Heart right ventricle (tissue), 16 donors: ENCODE measurements at regions of chr6 and their contacts with region 1.

Region 1: GRCh38 chr6:158072083-158072721 is 90.5 kb downstream of the SYNJ2 start:
- DNase-seq: peak; percentile 74 to 77
- ATAC-seq: peak; percentile 57 to 77 (median 62)
- H3K4me3 ChIP-seq: no peak overlapping the region
- H3K27ac ChIP-seq: peak overlapping the region in 3 of 10 donors; percentile 6 to 29 (median 16)
- H3K4me1 ChIP-seq: peaks cover 0 to 48% (median 11%) of the 10 kb centered on the region in 9 donors
- H3K27me3 ChIP-seq: no peaks in the 10 kb centered on the region
- CTCF ChIP-seq: peak; percentile 81 to 92 (median 85)

Region 2: DNA sequence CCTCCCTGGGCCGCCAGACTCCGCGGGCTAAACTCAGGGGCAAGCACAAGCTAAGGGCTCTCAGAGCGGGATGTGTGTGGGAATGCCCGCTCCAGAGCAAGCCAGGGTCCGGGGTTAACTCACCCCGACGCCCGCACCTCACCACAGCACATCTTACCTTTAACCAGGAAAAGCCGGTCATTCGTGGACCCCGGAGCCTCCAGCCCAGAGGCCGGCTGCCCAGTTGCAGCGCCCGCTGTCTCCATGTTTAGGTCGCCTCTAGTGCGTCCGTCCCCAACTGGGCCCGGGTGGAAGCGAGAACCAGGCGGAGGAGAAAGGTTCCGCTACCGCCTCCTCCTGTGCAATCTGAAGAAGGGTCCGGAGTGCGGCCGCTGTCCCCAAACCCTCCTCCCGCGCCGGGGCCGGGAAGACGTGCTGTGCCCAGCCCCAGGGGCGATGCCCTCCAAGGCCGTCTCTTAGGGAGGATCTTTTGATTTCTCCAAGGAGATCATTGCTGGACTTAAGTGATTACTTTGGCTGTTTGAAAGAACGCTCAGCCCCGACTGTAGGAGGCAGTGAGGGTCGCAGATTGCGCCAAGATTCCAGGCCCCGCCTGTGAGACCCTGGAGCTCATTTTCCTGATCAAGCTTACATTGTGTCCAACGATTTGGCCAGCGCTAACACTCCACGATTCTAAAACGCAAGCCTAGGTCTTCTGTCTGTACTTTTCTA is 748.8 kb before region 1 on chr6 and contains the start of gene TMEM242:
- intact Hi-C with region 1: loop called in 2 of 10 experiments (anchors 10 kb)
- DNase-seq: peak; percentile 92 to 93
- ATAC-seq: peak; percentile 94 to 98 (median 97)
- H3K4me3 ChIP-seq: peak within 1 kb of the TSS; percentile 61 to 88 (median 76)
- H3K27ac ChIP-seq: peak within 1 kb of the TSS; percentile 74 to 98 (median 95)
- H3K4me1 ChIP-seq: peaks cover 11 to 41% (median 30%) of the 10 kb centered on the region in 9 donors
- H3K27me3 ChIP-seq: no peaks in the 10 kb centered on the region
- CTCF ChIP-seq: peak; percentile 10 to 46 (median 29)
- total RNA-seq, gene TMEM242: 12.5 to 18.7 (median 16.7) TPM

Region 3: DNA sequence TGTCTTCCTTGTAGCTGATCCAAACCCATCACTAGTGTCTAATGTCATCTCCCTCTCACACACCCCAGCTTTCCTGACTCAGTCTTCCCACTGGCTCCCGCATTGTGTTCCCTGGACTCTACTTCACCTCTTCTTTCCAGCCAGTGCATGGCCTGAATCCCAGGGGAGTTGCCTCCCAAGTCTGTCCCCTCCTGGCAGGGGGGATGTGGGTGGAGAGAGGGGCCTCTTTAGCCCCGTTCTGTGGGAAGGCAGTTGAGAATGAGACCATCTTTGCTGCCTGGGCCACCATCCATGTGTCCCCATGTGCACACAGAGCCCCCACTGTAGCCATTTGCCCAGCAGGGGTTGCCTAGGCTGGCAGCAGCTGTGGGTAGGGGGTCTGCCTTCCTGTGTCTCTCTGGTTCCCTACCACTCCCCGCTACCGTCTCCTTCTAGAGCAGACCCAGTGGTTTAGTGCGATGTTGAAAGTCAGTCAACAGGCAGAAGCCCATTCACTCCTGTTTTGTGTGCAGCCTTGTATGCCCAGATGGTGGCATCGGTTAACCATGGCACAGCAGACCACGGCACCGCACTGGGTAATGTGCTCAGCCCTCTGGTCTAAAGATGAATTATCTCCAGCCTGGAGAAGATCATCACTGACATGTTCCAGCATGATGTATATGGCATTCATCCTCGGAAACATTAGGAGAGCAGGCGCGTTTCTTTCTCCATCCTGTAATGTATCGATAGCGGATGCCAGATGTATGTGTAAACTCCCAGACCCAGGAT is 428.0 kb before region 1 on chr6:
- intact Hi-C with region 1: loop called in 1 of 10 experiments (anchors 5 kb)
- DNase-seq: no peak
- ATAC-seq: peak in 1 of 8 donors; percentile 18
- H3K4me3 ChIP-seq: no peak overlapping the region
- H3K27ac ChIP-seq: no peak overlapping the region
- H3K4me1 ChIP-seq: peaks cover 0 to 5% (median 0%) of the 10 kb centered on the region in 9 donors
- H3K27me3 ChIP-seq: no peaks in the 10 kb centered on the region
- CTCF ChIP-seq: peak in 6 of 9 donors; percentile 15 to 32 (median 24)

Region 4: GRCh38 chr6:157756708-157757429 is 315.3 kb before region 1 on chr6:
- intact Hi-C with region 1: loop called in 8 of 10 experiments (anchors 5 to 10 kb)
- DNase-seq: peak; percentile 83 to 90
- ATAC-seq: peak; percentile 85 to 94 (median 90)
- H3K4me3 ChIP-seq: peak overlapping the region in 1 of 10 donors; percentile 2
- H3K27ac ChIP-seq: peak overlapping the region in 3 of 10 donors; percentile 17 to 54 (median 32)
- H3K4me1 ChIP-seq: peaks cover 0 to 46% (median 21%) of the 10 kb centered on the region in 9 donors
- H3K27me3 ChIP-seq: no peaks in the 10 kb centered on the region
- CTCF ChIP-seq: peak; percentile 66 to 90 (median 83)

Region 5: GRCh38 chr6:157929765-157930319 is 142.4 kb before region 1 on chr6:
- intact Hi-C with region 1: loop called in 1 of 10 experiments (anchors 10 kb)
- DNase-seq: no peak
- ATAC-seq: no peak
- H3K4me3 ChIP-seq: no peak overlapping the region
- H3K27ac ChIP-seq: no peak overlapping the region
- H3K4me1 ChIP-seq: no peaks in the 10 kb centered on the region
- H3K27me3 ChIP-seq: no peaks in the 10 kb centered on the region
- CTCF ChIP-seq: no peak

Region 6: GRCh38 chr6:157981395-157982296 is 90.6 kb before region 1 on chr6 and contains the start of gene SYNJ2:
- intact Hi-C with region 1: loop called in 9 of 10 experiments (anchors 2 to 5 kb)
- DNase-seq: peak; percentile 78
- ATAC-seq: peak; percentile 84 to 91 (median 88)
- H3K4me3 ChIP-seq: peak within 1 kb of the TSS; percentile 71 to 99 (median 92)
- H3K27ac ChIP-seq: peak within 1 kb of the TSS; percentile 1 to 89 (median 84)
- H3K4me1 ChIP-seq: peaks cover 0 to 45% (median 10%) of the 10 kb centered on the region in 9 donors
- H3K27me3 ChIP-seq: peaks cover 0 to 5% (median 0%) of the 10 kb centered on the region in 7 donors
- CTCF ChIP-seq: peak; percentile 31 to 77 (median 59)
- total RNA-seq, gene SYNJ2: 14.0 to 27.8 (median 19.6) TPM

Region 7: DNA sequence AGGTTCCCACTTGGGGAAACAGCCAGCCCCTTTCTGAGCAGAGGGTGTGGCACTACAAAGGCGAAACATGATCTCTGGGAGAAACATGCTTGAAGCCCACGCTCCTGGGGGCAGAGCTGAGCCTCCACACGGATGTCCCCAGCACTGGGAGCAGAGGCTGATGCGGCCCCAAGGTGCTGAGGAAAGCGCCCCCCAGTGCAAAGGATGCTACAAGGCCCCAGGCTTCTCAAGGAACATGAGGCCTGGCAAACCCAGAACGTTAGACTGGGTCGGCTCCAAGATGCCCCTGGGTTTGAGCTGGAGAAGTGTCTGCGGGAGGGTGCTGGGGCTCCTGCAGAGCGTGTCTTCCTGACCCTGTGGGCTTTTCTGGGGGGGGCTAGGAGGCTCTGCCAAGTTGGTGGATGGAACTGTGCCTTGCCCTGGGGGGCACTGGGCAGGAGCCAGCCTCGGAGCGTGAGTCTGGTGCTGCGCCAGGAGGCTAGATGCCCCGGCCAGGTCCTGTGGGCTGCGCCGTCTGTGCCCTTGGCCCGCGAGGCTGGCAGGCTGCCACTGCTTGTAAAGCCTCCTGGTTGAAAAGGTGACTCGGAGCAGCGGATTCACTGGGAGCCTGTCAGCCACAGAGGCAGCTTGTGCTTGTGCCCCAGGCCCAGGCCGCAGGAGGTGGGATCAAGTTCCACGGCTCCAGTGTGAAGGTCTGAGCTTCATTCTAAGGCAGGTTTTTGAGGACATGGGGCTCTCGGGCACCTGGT is 82.5 kb before region 1 on chr6:
- intact Hi-C with region 1: loop called in 5 of 10 experiments (anchors 5 kb)
- DNase-seq: peak; percentile 63 to 82
- ATAC-seq: peak; percentile 64 to 90 (median 83)
- H3K4me3 ChIP-seq: no peak overlapping the region
- H3K27ac ChIP-seq: peak overlapping the region in 7 of 10 donors; percentile 6 to 69 (median 47)
- H3K4me1 ChIP-seq: peaks cover 7 to 44% (median 21%) of the 10 kb centered on the region in 9 donors
- H3K27me3 ChIP-seq: no peaks in the 10 kb centered on the region
- CTCF ChIP-seq: no peak

Region 8: GRCh38 chr6:158122048-158122447 is 49.8 kb after region 1 on chr6:
- intact Hi-C with region 1: no loop called
- DNase-seq: no peak
- ATAC-seq: no peak
- H3K4me3 ChIP-seq: no peak overlapping the region
- H3K27ac ChIP-seq: no peak overlapping the region
- H3K4me1 ChIP-seq: no peaks in the 10 kb centered on the region
- H3K27me3 ChIP-seq: no peaks in the 10 kb centered on the region
- CTCF ChIP-seq: no peak